Naive thymus-derived CD8-positive, alpha-beta T cell (primary cell): ENCODE measurements at regions of chr5 and their contacts with region 1.

Region 1: DNA sequence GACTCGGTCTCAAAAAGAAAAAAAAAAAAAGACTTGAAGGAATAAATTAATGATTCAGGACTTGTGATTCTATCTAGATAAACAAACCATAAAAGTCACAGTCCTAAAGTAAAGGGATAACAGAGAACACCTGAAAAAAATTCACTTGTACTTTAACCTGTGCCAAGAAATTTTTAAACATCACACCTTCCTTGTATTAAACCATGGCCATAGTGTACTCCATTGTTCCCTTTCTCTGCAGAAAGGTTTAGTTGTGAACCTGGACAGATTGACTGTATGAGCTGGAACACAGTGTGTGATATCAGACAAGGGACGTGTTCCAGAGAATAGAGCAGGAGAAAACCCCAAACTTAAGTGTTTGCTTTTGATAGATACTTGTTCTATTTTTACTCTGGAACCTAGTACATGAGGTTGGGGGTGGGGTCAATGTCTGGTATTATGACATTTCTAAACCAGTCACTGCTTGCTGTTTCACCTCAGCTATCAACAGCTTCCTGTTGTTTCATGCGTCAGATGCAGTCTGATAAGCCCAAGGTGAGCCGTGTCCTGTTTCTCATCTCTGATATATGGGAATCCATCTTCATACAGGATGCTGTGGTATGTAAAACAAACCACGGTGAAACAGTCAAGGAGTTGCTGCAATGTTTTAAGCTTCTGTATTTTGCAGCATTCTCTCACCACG is 62.5 kb upstream of the ITGA1 start:
- DNase-seq: peak; percentile 11 to 91 (median 71)
- ATAC-seq: peak; percentile 96 to 98
- H3K4me3 Mint-ChIP-seq: peak overlapping the region; percentile 49 to 85 (median 73)
- H3K27ac Mint-ChIP-seq: peak overlapping the region; percentile 87 to 99 (median 94)
- H3K4me1 Mint-ChIP-seq: peaks cover 25 to 61% (median 61%) of the 10 kb centered on the region in 4 donors
- H3K27me3 Mint-ChIP-seq: no peaks in the 10 kb centered on the region

Region 2: GRCh38 chr5:52746539-52746938 is 21.3 kb after region 1 on chr5:
- POLR2A ChIA-PET with region 1: interaction called, 10 read pairs
- DNase-seq: no peak
- ATAC-seq: no peak
- H3K4me3 Mint-ChIP-seq: no peak overlapping the region
- H3K27ac Mint-ChIP-seq: peak overlapping the region in 2 of 10 donors; percentile 91 to 95
- H3K4me1 Mint-ChIP-seq: peaks cover 26 to 52% (median 49%) of the 10 kb centered on the region in 4 donors
- H3K27me3 Mint-ChIP-seq: no peaks in the 10 kb centered on the region

Region 3: DNA sequence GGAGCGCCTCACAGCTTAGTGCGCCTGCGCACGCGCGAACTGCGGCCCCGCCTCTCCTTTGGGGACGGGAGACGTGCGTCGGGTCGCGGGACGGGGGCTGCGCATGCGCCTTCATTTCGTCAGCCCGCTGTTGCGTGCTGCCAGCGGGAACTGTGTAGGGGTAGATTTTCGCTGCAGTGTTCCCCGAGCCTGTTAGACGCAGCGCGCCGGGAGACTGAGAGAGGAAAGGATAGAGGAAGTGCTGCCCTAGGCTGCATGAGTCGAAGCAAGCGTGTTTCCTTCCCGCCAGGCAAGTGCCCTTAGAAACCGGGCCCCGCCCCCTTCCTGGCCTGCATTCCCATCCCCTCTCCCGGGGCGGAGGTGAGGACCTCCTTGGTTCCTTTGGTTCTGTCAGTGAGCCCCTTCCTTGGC is 74.8 kb after region 1 on chr5:
- POLR2A ChIA-PET with region 1: interaction called, 11 read pairs
- DNase-seq: peak in 9 of 10 donors; percentile 90 to 97 (median 95)
- ATAC-seq: peak; percentile 90 to 91
- H3K4me3 Mint-ChIP-seq: peak overlapping the region; percentile 93 to 99 (median 96)
- H3K27ac Mint-ChIP-seq: peak overlapping the region; percentile 89 to 98 (median 95)
- H3K4me1 Mint-ChIP-seq: peaks cover 31 to 66% (median 62%) of the 10 kb centered on the region in 4 donors
- H3K27me3 Mint-ChIP-seq: no peaks in the 10 kb centered on the region

Region 4: GRCh38 chr5:52878656-52879055 is 153.4 kb after region 1 on chr5:
- POLR2A ChIA-PET with region 1: no interaction called
- DNase-seq: no peak
- ATAC-seq: no peak
- H3K4me3 Mint-ChIP-seq: no peak overlapping the region
- H3K27ac Mint-ChIP-seq: no peak overlapping the region
- H3K4me1 Mint-ChIP-seq: peaks cover 0 to 3% (median 0%) of the 10 kb centered on the region in 4 donors
- H3K27me3 Mint-ChIP-seq: peaks cover 0 to 13% (median 1%) of the 10 kb centered on the region in 5 donors

Region 5: DNA sequence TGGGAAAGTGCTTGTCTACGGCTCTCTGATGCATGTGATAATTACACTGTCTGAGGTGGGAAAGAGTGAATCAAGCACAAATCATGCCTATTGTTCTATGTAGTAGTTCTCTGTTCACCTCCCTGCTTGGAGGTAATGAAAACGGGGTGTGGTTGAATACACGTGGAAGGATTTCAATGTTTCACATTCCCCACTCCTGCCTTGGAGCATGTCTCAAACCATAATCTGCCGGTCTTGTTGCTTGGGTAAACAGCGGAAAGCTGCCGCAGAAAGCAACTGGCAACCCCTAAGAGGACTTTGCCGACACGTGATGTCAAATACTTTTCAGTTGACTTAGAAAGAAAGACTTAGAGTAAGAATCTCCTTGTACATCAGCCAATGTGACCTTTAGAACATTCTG is 447.9 kb after region 1 on chr5:
- POLR2A ChIA-PET with region 1: no interaction called
- DNase-seq: no peak
- ATAC-seq: no peak
- H3K4me3 Mint-ChIP-seq: no peak overlapping the region
- H3K27ac Mint-ChIP-seq: no peak overlapping the region
- H3K4me1 Mint-ChIP-seq: no peaks in the 10 kb centered on the region
- H3K27me3 Mint-ChIP-seq: peaks cover 0 to 4% (median 2%) of the 10 kb centered on the region in 5 donors